A549 (cell line): ENCODE measurements at regions of chr3 and their contacts with region 1.

Region 1: DNA sequence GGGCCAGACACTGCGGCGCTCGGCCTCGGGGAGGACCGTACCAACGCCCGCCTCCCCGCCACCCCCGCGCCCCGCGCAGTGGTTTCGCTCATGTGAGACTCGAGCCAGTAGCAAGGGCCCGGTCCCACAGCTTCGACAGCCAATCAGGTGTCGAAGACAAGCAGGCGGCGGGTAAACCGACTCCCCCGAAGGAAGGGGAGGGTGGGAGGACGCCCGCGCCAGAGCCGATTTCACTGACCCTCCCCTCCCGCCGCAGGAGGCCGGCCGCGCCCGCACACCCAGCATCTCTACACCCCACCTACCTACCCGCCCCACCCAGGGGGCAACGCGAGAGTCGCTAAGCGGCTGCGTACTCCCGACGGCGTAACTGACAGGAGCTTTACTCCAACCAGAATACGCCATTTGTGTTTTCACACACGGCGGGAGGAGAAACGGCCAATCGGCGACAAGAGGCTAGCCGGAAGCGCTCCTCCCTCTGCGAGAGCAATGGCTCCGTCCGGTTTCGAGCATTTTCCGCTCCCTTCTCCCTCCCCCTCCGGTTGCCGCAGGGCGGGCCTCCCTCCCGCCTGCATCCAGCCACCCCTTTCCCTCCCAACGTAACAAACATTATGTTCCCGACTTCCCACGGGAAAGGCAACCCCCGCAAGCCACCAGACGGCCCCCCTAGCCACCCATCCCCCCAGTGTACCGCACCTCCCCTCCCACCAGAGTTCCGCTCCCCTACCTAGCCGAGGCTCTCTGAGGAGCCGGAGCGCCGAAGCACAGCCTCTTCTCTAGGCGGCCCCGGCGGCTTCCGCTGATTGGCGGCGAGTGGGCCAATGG is 504 bp upstream of the SETD5 start:
- DNase-seq: peak; percentile 90 to 99
- ATAC-seq: peak; percentile 72 to 88
- H3K4me3 ChIP-seq: peak overlapping the region; percentile 84
- H3K27ac ChIP-seq: peak overlapping the region; percentile 99 to 100
- H3K4me1 ChIP-seq: peaks cover 56% of the 10 kb centered on the region
- CTCF ChIP-seq: no peak
- EP300 ChIP-seq: no peak
- POLR2A ChIP-seq: peak; percentile 95
- RAD21 ChIP-seq: no peak

Region 2: DNA sequence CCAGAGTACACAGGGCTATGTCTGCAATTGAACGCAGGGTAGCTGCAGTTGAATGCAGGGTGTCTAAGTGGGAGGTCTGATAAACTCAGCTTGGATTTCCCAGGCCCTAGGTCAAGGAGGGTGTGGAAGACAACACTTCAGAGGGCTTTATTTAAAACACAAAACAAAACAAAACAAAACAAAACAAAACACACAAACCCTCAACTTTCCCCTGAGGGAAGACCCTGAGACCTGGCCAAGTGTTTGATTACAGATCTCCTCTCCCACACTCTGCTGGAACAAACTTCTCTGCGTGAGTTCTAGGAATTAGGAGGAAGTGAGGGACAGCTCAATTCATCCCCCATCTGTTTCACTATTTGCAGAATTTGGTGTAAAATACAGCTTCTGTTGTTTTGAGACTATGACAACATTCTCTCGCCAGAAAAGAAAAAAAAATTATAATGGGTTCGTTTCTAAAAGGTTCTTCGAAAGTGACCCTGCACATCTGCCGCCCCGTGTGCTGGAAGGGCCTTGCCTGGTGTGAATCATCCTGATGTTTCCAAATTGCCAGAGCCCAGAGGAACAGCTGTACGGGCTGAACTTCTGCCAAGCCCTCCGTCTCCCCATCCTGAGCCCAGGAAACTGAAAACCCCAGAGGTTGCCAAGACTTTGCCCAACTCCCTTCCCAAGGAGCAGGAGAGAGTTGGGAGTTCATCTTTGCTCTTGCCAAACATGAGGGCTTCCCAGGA is 360.3 kb before region 1 on chr3:
- CTCF ChIA-PET with region 1: no interaction called
- POLR2A ChIA-PET with region 1: no interaction called
- DNase-seq: no peak
- ATAC-seq: no peak
- H3K4me3 ChIP-seq: no peak overlapping the region
- H3K27ac ChIP-seq: no peak overlapping the region
- H3K4me1 ChIP-seq: no peaks in the 10 kb centered on the region
- CTCF ChIP-seq: no peak
- EP300 ChIP-seq: no peak
- POLR2A ChIP-seq: no peak
- RAD21 ChIP-seq: no peak

Region 3: DNA sequence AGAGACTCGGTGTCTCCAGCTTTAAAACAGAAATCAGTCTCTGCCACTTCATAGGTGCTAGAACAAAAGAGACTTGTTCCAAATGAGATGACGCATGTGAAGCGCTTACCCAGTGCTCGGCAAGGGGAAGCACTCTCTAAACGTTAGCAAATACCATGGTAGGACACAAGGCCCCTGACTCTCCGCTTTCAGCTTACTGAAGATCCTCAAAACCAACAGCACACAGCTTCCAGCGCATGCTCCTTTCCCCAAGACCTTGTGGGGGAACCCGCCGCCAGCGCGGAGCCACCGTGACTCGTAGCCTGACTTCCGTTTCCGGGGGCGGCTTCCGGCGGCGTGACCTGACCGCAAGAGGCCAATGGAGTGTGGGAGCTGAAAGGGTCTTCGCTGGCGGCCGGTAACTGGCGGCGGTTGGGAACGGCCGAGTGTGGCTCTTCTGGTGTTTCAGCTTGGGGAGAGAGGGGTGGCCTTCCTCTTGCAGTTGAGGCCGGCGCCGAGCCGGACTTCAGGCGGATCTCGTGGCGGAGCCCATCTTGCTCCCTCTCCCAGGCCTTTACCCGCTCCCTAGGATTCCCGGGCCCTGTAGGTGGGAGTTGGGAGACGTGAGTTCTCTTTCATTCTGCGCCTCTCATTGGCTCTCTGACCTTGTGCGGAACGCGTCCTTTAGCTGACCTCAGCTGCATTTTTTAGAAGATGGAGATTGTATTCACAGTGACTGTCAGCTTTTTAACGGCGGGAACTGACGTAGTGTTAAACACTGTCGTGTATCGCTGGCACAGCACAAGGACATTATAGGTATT is 34.0 kb before region 1 on chr3 and contains the start of gene THUMPD3:
- CTCF ChIA-PET with region 1: interaction called, 5 read pairs
- POLR2A ChIA-PET with region 1: interaction called, 62 read pairs
- DNase-seq: peak; percentile 88 to 95
- ATAC-seq: peak; percentile 99 to 100
- H3K4me3 ChIP-seq: peak within 1 kb of the TSS; percentile 81
- H3K27ac ChIP-seq: peak within 1 kb of the TSS; percentile 90 to 93
- H3K4me1 ChIP-seq: peaks cover 19% of the 10 kb centered on the region
- CTCF ChIP-seq: no peak
- EP300 ChIP-seq: no peak
- POLR2A ChIP-seq: peak; percentile 88
- RAD21 ChIP-seq: no peak
- polyA plus RNA-seq, gene THUMPD3: 86.0 and 93.2 TPM in 2 replicates

Region 4: DNA sequence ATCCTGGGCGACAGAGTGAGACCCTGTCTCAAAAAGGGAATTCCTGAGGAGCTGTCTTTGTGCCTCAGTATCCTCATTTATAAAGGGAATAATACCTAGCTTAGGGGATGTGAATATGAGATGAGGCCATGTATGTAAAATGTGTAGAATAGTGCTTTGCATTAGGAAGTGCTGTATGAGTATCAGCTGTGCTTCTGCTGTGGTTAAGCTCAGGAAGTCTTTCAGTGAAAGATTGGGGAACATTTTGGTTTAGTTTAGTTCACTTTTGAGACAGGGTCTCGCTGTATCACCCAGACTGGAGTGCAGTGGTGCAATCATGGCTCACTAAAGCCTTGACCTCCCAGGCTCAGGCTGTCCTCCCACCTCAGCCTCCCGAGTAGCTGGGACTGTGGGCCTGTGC is 23.4 kb before region 1 on chr3:
- CTCF ChIA-PET with region 1: interaction called, 4 read pairs
- POLR2A ChIA-PET with region 1: interaction called, 12 read pairs
- DNase-seq: no peak
- ATAC-seq: no peak
- H3K4me3 ChIP-seq: no peak overlapping the region
- H3K27ac ChIP-seq: no peak overlapping the region
- H3K4me1 ChIP-seq: no peaks in the 10 kb centered on the region
- CTCF ChIP-seq: no peak
- EP300 ChIP-seq: no peak
- POLR2A ChIP-seq: no peak
- RAD21 ChIP-seq: no peak

Region 5: GRCh38 chr3:9384141-9384853 is 12.6 kb before region 1 on chr3:
- CTCF ChIA-PET with region 1: interaction called, 5 read pairs
- POLR2A ChIA-PET with region 1: interaction called, 51 read pairs
- DNase-seq: no peak
- ATAC-seq: peak; percentile 30 to 42; a peak in 3 of 6 replicates
- H3K4me3 ChIP-seq: no peak overlapping the region
- H3K27ac ChIP-seq: no peak overlapping the region
- H3K4me1 ChIP-seq: peaks cover 21% of the 10 kb centered on the region; the same call in 1 of the 3 replicates
- CTCF ChIP-seq: no peak
- EP300 ChIP-seq: no peak
- POLR2A ChIP-seq: no peak
- RAD21 ChIP-seq: no peak

Region 6: DNA sequence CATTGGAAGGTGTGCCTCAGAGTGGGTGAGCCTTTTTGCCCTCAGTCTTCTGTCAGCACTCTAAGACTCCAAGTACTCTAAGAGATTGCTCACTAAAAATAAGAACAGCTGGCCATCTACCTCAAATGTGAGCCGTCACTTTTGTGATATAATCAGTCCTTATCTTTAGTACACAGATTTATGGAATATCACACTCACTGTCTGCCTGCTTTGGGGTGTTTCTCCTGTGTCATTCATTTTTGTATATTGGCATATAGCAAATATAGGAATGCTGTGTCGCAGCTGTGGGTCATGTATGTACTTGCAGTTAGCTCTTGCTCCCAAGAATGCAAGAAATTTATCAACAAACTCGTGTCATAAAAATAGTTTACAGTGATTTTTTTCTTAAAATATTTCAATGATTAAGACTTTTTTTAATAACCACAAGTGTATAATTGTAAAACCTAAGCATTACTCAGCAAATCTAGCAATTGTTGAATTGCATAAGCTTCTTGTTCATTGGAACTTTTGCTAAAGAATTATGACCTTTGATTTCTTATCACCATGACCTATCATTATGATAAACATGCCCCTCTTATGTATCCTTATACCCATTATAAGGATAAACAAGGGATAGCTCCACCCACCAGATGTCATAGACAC is 19.3 kb after region 1 on chr3:
- CTCF ChIA-PET with region 1: interaction called, 22 read pairs
- POLR2A ChIA-PET with region 1: interaction called, 62 read pairs
- DNase-seq: peak in 1 of 2 experiments; percentile 28
- ATAC-seq: peak in 1 of 2 experiments; percentile 62; a peak in 4 of 6 replicates
- H3K4me3 ChIP-seq: no peak overlapping the region
- H3K27ac ChIP-seq: peak overlapping the region; percentile 64 to 70
- H3K4me1 ChIP-seq: peaks cover 90% of the 10 kb centered on the region
- CTCF ChIP-seq: no peak
- EP300 ChIP-seq: no peak
- POLR2A ChIP-seq: no peak
- RAD21 ChIP-seq: no peak

Region 7: DNA sequence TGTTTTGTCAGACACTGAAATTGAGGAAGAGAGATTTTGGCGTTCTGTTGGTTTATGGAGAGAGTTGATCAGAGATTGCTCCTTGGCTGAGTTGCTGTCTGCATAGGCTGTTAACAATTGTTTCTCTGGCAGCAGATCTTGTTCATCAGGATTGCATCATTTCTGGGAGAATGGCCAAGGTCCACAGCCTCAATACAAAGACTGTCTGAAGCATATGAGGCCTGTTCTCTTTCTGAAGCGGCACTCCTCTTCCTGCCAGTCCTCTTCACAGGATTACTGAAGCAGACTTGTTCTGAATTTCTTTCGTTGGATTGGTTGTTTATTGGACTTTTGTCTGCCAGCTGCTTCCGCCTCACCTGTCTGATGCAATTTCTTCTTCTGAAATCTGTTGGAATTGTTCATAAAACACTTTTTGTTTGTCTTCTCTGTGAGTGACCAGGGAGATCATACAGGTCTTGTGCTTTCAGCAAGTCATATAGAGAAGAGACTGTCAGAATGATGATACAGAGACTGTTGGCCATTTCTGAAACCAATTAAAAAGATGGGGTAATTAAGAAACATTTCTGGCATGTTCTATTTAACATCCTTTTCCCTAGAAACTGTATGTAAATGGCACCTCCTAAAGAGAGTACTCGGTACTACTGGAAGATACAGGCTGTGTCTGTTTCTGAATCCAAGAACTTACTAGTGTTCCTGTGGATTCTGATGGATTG is 26.0 kb after region 1 on chr3:
- CTCF ChIA-PET with region 1: interaction called, 22 read pairs
- POLR2A ChIA-PET with region 1: interaction called, 62 read pairs
- DNase-seq: peak; percentile 60 to 90
- ATAC-seq: peak; percentile 94 to 96
- H3K4me3 ChIP-seq: peak overlapping the region; percentile 18; the same call in 1 of the 3 replicates
- H3K27ac ChIP-seq: peak overlapping the region; percentile 85 to 87
- H3K4me1 ChIP-seq: peaks cover 68% of the 10 kb centered on the region
- CTCF ChIP-seq: peak; percentile 60
- EP300 ChIP-seq: no peak
- POLR2A ChIP-seq: no peak
- RAD21 ChIP-seq: peak; percentile 59 to 61